Activated CD4-positive, alpha-beta T cell treated with anti-CD3 and anti-CD28 coated beads for 36 hours (primary cell): ENCODE measurements at regions of chr6 and their contacts with region 1.

Region 1: GRCh38 chr6:83067448-83068413 is at the start of gene DOP1A:
- DNase-seq: peak; percentile 99
- ATAC-seq: peak; percentile 87
- H3K4me3 Mint-ChIP-seq: peak within 1 kb of the TSS; percentile 88
- H3K27ac Mint-ChIP-seq: peak within 1 kb of the TSS; percentile 84
- H3K4me1 Mint-ChIP-seq: peaks cover 47% of the 10 kb centered on the region
- H3K27me3 Mint-ChIP-seq: no peaks in the 10 kb centered on the region
- total RNA-seq, gene DOP1A: 5.4 to 7.3 TPM

Region 2: GRCh38 chr6:82247634-82248232 is 820.0 kb before region 1 on chr6 and contains the start of gene IBTK:
- CTCF ChIA-PET with region 1: interaction called, 6 read pairs
- POLR2A ChIA-PET with region 1: interaction called, 8 read pairs
- intact Hi-C with region 1: loop called (anchors 2 kb)
- DNase-seq: peak; percentile 92
- ATAC-seq: peak; percentile 87
- H3K4me3 Mint-ChIP-seq: peak within 1 kb of the TSS; percentile 97
- H3K27ac Mint-ChIP-seq: peak within 1 kb of the TSS; percentile 93
- H3K4me1 Mint-ChIP-seq: peaks cover 34% of the 10 kb centered on the region
- H3K27me3 Mint-ChIP-seq: no peaks in the 10 kb centered on the region
- total RNA-seq, gene IBTK: 28.6 to 29.5 TPM

Region 3: GRCh38 chr6:83086751-83087150 is 19.0 kb after region 1 on chr6:
- CTCF ChIA-PET with region 1: interaction called, 21 read pairs
- POLR2A ChIA-PET with region 1: no interaction called
- intact Hi-C with region 1: no loop called
- DNase-seq: no peak
- ATAC-seq: peak; percentile 39
- H3K4me3 Mint-ChIP-seq: no peak overlapping the region
- H3K27ac Mint-ChIP-seq: no peak overlapping the region
- H3K4me1 Mint-ChIP-seq: peaks cover 17% of the 10 kb centered on the region
- H3K27me3 Mint-ChIP-seq: no peaks in the 10 kb centered on the region

Region 4: GRCh38 chr6:83192871-83193746 is 125.4 kb after region 1 on chr6 and contains the starts of genes PGM3 and RWDD2A:
- CTCF ChIA-PET with region 1: interaction called, 33 read pairs
- POLR2A ChIA-PET with region 1: interaction called, 3 read pairs
- intact Hi-C with region 1: loop called (anchors 1 kb)
- DNase-seq: peak; percentile 93
- ATAC-seq: peak; percentile 99
- H3K4me3 Mint-ChIP-seq: peak within 1 kb of the TSS; percentile 95
- H3K27ac Mint-ChIP-seq: peak within 1 kb of the TSS; percentile 94
- H3K4me1 Mint-ChIP-seq: peaks cover 34% of the 10 kb centered on the region
- H3K27me3 Mint-ChIP-seq: no peaks in the 10 kb centered on the region
- total RNA-seq, gene PGM3: 12.6 to 19.6 TPM
- total RNA-seq, gene RWDD2A: 1.6 to 1.9 TPM

Region 5: DNA sequence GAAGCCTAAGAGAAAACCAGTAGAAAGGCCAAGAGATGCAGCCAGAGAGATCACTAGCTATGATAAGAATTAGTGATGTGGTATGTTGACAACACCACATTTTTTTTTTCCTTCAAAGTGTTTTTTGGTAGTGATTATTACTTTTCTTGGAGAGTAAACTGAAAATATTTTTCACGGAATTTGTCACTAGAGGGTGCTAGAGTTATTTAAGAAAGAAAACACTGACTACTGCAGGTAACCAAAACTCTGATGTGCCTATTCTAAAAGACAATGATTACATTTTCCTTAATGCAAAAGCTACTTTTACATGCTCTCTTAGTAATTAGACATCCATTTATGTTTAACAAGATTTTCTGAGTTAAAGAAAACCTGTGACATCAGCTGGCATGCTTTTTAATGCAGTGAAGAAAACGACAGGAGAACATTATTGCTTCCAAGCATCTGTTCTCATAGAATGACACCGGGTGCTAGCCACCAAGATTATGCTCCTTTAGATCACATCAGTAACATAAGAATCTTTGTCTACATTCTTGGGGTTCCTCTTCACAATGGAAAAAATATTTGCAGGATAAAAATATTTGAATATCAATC is 154.3 kb after region 1 on chr6:
- CTCF ChIA-PET with region 1: interaction called, 101 read pairs
- POLR2A ChIA-PET with region 1: no interaction called
- intact Hi-C with region 1: no loop called
- DNase-seq: no peak
- ATAC-seq: no peak
- H3K4me3 Mint-ChIP-seq: no peak overlapping the region
- H3K27ac Mint-ChIP-seq: no peak overlapping the region
- H3K4me1 Mint-ChIP-seq: no peaks in the 10 kb centered on the region
- H3K27me3 Mint-ChIP-seq: no peaks in the 10 kb centered on the region

Region 6: DNA sequence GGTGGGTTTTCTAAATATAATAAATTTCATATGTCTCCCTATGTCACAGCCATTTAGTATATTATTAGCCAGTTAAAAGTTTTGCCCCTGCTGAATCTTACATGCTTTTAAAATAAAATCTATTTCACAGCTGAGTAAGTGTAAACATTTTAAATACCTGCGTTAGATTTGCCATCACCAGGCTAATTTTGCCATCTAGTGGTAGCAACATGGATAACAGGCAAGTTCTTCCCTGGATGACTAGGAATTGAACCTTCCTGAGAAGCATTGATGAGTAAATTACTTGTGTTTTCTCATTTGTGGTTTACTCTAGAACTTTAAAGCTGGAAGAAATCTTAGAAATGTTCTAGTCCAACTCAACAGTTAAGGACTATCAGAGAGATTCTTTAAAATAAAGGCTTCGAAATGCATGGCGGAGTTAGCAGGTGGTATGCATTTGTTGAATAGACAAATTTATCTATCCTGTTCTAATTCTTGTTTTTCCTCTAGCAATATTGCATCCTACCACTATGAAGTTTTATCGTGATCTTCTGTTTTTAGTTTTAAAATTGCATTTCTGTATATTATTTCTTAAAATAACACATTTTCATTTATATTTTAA is 447.2 kb after region 1 on chr6:
- CTCF ChIA-PET with region 1: interaction called, 5 read pairs
- POLR2A ChIA-PET with region 1: no interaction called
- intact Hi-C with region 1: loop called (anchors 1 to 5 kb)
- DNase-seq: peak; percentile 23
- ATAC-seq: no peak
- H3K4me3 Mint-ChIP-seq: no peak overlapping the region
- H3K27ac Mint-ChIP-seq: no peak overlapping the region
- H3K4me1 Mint-ChIP-seq: peaks cover 4% of the 10 kb centered on the region
- H3K27me3 Mint-ChIP-seq: peaks cover 30% of the 10 kb centered on the region

Region 7: GRCh38 chr6:84227434-84228197 is 1159.9 kb after region 1 on chr6 and contains the start of gene CEP162:
- CTCF ChIA-PET with region 1: no interaction called
- POLR2A ChIA-PET with region 1: no interaction called
- intact Hi-C with region 1: loop called (anchors 1 to 5 kb)
- DNase-seq: peak; percentile 93
- ATAC-seq: peak; percentile 96
- H3K4me3 Mint-ChIP-seq: peak within 1 kb of the TSS; percentile 84
- H3K27ac Mint-ChIP-seq: peak within 1 kb of the TSS; percentile 92
- H3K4me1 Mint-ChIP-seq: peaks cover 12% of the 10 kb centered on the region
- H3K27me3 Mint-ChIP-seq: peaks cover 5% of the 10 kb centered on the region
- total RNA-seq, gene CEP162: 7.2 to 7.3 TPM